CD14-positive monocyte (primary cell): ENCODE measurements at regions of chr12 and their contacts with region 1.

Region 1: DNA sequence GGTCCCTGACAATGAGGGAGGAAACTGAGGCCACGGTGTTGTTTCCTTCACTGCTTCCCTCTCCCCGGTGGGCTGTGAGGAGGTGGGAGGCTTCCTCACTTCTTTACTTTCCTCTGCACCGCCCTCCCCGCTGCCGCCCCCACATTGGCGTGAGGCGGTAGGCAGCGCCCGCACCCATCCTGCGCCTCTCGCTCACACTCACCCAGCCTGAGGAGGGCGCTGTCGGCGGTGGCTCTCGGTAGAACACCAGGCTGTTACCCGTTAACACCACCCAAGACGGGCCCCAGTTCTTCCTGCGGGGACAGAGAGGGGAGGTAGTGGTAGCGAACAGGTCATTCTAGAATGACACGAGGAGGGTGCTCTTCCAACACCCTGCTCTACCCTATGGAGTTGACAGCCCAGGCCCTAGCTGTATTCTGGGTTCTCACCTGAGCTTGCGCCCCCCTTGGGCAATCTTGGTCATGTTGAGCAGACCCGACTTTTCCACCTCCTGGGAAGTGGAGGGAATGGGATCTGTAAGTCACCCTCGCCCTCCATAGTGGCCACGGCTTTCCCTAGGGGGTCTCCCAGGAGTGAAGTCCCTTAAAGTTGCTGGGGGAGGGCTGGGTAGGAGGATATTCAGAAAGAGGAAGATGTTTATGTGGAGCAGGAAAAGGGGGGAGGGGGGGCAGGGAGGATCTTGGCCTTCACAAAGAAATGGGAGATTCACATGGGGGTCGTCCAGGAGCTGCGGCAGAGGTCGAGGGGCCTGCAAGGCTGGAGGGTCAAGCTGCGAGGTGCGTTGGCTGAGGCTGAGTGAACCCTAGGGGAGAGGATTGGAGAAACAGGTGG is 3.3 kb downstream of the ARHGAP9 start:
- DNase-seq: peak in 2 of 3 donors; percentile 34 to 44
- H3K4me3 ChIP-seq: peak overlapping the region; percentile 79 to 100 (median 86)
- H3K4me3 Mint-ChIP-seq: peak overlapping the region; percentile 97 to 99
- H3K27ac ChIP-seq: peak overlapping the region; percentile 62 to 83
- H3K27ac Mint-ChIP-seq: peak overlapping the region; percentile 86 to 97 (median 96)
- H3K4me1 ChIP-seq: peaks cover 55 to 79% of the 10 kb centered on the region in 2 donors
- H3K4me1 Mint-ChIP-seq: peaks cover 74% of the 10 kb centered on the region
- H3K27me3 ChIP-seq: no peaks in the 10 kb centered on the region
- H3K27me3 Mint-ChIP-seq: peaks cover 0 to 2% (median 0%) of the 10 kb centered on the region in 3 donors
- CTCF ChIP-seq: peak; percentile 90

Region 2: GRCh38 chr12:57520053-57520871 is 43.9 kb after region 1 on chr12 and contains the start of gene DDIT3:
- intact Hi-C with region 1: loop called in 1 of 2 experiments (anchors 5 kb)
- DNase-seq: peak; percentile 99 to 100 (median 99)
- H3K4me3 ChIP-seq: peak within 1 kb of the TSS; percentile 70 to 98 (median 89)
- H3K4me3 Mint-ChIP-seq: peak within 1 kb of the TSS; percentile 96 to 97
- H3K27ac ChIP-seq: peak within 1 kb of the TSS; percentile 98 to 99
- H3K27ac Mint-ChIP-seq: peak within 1 kb of the TSS; percentile 99 to 100 (median 99)
- H3K4me1 ChIP-seq: peaks cover 52 to 58% of the 10 kb centered on the region in 2 donors
- H3K4me1 Mint-ChIP-seq: peaks cover 51% of the 10 kb centered on the region
- H3K27me3 ChIP-seq: no peaks in the 10 kb centered on the region
- H3K27me3 Mint-ChIP-seq: peaks cover 0 to 1% (median 0%) of the 10 kb centered on the region in 3 donors
- CTCF ChIP-seq: no peak
- polyA plus RNA-seq, gene DDIT3: 9.3 to 163 (median 9.4) TPM

Region 3: DNA sequence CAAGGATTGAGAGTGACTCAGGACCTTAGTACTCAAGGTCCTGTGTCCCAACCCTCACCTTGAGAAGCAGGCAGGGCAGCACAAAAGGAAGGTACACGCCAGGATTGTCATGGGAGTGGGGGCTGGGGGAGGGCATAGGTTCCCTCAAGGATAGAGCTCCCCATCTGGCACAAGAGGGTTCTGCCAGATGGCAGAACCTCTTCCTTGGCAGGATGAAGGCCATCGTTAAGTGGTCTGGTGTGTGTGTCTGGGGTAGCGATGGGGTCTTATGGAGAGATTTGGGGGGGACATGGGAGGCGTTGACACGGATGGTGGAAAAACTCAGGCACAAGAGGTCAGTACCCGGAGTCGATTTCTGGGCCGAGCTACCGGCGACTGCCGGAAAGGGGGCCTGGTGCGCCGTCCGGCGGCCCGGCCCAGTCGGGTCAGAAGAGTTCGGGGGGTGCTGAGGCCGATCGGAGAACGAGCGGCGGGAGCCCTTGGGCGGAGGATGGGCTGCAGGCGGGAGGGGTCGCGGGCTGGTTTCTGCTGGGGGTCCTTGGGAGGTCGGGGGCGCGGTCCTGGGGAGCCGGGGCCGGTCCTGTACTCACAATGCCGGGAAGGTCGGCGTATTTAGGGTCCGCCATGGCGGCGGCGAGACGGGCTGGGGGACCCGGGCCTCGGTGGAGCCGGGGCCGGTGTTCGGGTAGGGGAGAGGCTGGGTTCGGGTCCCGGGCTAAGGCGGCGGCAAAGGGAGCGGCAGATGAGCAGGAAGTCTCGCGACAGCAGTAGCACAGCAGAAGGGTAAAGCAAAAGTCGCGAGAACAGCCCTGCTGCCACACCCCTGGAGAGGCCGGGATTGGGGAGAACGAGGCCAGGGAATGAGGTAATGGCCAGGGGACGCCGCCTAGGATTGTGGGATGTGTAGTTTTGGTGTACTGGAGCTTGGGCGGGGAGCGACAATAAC is 70.3 kb after region 1 on chr12 and contains the start of gene DCTN2:
- intact Hi-C with region 1: loop called (anchors 5 to 10 kb)
- DNase-seq: peak; percentile 93 to 97 (median 95)
- H3K4me3 ChIP-seq: peak within 1 kb of the TSS; percentile 73 to 96 (median 94)
- H3K4me3 Mint-ChIP-seq: peak within 1 kb of the TSS; percentile 99 to 100
- H3K27ac ChIP-seq: peak within 1 kb of the TSS; percentile 23 to 82
- H3K27ac Mint-ChIP-seq: peak within 1 kb of the TSS; percentile 84 to 96 (median 88)
- H3K4me1 ChIP-seq: peaks cover 18 to 42% of the 10 kb centered on the region in 2 donors
- H3K4me1 Mint-ChIP-seq: peaks cover 48% of the 10 kb centered on the region
- H3K27me3 ChIP-seq: peaks cover 25 to 35% of the 10 kb centered on the region in 2 donors
- H3K27me3 Mint-ChIP-seq: peaks cover 31 to 35% (median 31%) of the 10 kb centered on the region in 3 donors
- CTCF ChIP-seq: no peak
- polyA plus RNA-seq, gene DCTN2: 72.8 to 94.5 (median 82.2) TPM

Region 4: GRCh38 chr12:57621497-57622292 is 145.3 kb after region 1 on chr12:
- intact Hi-C with region 1: loop called in 1 of 2 experiments (anchors 10 kb)
- DNase-seq: peak; percentile 24 to 50 (median 36)
- H3K4me3 ChIP-seq: peak overlapping the region in 2 of 3 experiments; percentile 23 to 74
- H3K4me3 Mint-ChIP-seq: peak overlapping the region; percentile 73 to 93
- H3K27ac ChIP-seq: no peak overlapping the region
- H3K27ac Mint-ChIP-seq: peak overlapping the region in 1 of 7 donors; percentile 82
- H3K4me1 ChIP-seq: peaks cover 18 to 23% of the 10 kb centered on the region in 2 donors
- H3K4me1 Mint-ChIP-seq: peaks cover 25% of the 10 kb centered on the region
- H3K27me3 ChIP-seq: peaks cover 54 to 97% of the 10 kb centered on the region in 2 donors
- H3K27me3 Mint-ChIP-seq: peaks cover 95 to 99% (median 97%) of the 10 kb centered on the region in 3 donors
- CTCF ChIP-seq: peak; percentile 97